ENCODE measurements at regions of chr17 and their contacts with region 1.

Region 1: DNA sequence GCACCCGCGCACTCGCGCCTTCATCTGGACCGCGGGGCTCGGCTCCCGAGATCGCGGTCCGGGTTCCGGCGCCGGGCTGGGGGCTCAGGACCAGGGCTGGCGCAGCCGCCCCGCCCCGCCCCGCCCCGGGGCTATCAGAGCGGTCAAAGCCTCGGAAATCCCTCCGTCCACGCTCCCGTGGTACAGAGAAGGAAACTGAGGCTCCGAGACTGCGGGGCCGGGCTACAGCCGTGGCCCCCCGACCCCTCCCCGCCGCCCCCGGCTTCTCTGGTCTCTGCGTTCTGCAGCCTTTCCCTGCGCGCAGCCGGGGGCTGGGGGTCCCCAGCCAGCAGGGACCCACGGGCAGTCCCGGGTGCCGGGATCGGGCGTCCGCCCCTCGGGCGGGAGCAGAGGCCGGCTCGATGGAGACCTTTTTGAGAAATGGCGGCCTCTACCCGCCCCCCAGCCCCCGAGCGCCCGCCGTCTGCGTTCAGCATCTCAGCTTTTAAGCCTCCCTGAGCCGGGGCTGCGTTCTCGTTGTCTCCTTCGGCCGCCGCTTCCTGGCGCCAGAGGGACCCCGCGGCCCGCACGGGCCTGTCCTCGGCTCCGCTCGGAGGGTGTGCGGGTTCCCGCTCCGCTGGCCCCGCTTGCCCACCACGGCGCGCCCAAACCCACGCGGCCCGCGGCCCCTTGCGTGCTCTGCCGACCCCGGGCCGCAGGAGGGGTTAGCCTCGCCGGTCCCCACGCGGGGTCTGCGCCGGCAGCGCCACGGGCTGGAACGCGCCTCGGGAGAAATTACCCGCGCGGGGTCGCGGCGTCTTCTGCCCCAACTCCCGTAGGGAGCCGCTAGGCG is 1.5 kb upstream of the NPTX1 start:
- DNase-seq: no peak
- H3K4me3 ChIP-seq: peak overlapping the region; percentile 12 to 28
- H3K27ac ChIP-seq: no peak overlapping the region
- H3K4me1 ChIP-seq: peaks cover 37% of the 10 kb centered on the region
- H3K27me3 ChIP-seq: peaks cover 42% of the 10 kb centered on the region
- CTCF ChIP-seq: peak in 2 of 4 experiments; percentile 38 to 47
- POLR2A ChIP-seq: no peak

Region 2: GRCh38 chr17:80195731-80196529 is 281.9 kb before region 1 on chr17:
- intact Hi-C with region 1: no loop called
- DNase-seq: no peak
- H3K4me3 ChIP-seq: no peak overlapping the region
- H3K27ac ChIP-seq: no peak overlapping the region
- H3K4me1 ChIP-seq: peaks cover 4% of the 10 kb centered on the region
- H3K27me3 ChIP-seq: no peaks in the 10 kb centered on the region
- CTCF ChIP-seq: peak; percentile 45 to 68 (median 52)
- POLR2A ChIP-seq: no peak

Region 3: DNA sequence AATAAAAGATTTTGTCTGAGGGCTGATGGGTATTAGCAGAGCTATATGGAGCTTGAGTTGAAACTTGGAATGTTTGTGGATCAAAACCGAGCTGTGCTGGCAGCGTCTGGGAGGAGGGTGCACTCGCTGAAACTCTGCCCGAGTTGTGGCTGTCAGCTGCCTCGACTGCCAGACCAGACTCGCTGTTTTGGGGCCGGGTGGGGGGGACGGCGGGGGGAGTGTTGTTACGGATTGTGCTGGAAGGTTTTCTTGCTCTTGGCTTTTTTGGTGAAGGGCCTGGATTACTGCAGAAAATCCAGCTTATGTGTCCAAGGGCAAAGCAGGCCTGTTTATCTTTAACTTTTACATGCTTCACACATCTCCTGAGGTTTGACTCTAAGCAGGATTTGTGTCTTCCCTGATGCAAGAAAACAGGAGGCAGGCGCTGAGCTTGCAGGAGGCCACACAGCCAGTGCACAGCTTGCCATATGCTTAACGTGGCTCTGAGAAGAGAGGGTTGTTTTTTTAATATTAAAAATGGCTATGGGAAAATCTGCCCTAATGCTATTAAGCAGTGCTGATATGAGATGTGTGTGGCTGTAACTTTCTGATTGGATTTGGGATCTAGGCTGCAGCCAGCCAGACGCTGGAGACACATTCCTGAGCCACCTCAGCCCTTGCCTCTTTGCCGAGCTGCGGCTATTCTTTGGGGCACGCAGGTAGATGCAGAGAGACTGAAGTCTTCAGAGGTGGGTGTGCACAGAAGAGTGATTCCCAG is 46.3 kb after region 1 on chr17:
- intact Hi-C with region 1: no loop called
- DNase-seq: no peak
- H3K4me3 ChIP-seq: no peak overlapping the region
- H3K27ac ChIP-seq: no peak overlapping the region
- H3K4me1 ChIP-seq: no peaks in the 10 kb centered on the region
- H3K27me3 ChIP-seq: no peaks in the 10 kb centered on the region
- CTCF ChIP-seq: no peak
- POLR2A ChIP-seq: no peak

Region 4: DNA sequence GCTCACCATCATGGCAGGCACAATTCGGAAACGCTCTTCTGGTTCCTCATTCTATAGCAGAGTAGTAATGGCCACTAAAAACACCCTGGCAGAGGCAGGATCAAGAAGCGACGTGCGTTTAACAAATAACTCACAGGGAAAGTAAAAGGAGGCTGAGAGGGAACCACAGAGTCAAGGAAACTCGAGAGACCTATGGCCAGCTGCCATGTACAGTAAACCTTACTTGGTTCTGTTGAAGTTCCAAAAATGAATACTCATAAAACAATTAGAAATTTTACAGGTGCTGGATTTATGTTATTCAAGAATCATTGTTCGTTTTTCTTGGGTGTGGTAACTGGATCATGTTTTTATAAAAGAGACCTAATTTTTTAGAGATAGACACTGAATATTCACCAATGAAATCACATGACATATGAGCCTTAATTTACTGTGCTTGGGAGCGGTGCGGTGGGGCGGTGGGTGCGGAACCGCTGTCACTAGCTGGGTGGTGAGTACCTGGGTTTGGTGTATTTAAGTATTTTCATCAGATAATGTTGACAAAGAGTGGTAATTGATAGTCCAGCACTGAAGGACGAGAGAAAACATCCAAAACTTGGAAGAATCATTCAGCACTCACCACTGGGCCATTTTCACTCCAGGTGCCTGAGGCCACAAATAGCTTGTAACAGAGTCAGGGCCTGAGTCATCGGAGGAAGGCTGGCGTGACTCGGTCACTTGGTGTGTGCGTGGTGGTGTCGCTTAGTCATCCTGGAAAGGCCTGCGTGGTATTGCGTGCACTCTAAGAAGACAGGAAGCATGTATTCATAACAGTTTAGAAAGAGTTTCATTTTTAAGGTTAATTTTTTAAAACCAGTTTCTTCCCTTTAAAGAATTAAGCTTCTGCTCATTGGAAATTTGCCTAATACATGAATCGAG is 378.3 kb after region 1 on chr17:
- intact Hi-C with region 1: loop called (anchors 10 kb)
- DNase-seq: no peak
- H3K4me3 ChIP-seq: no peak overlapping the region
- H3K27ac ChIP-seq: no peak overlapping the region
- H3K4me1 ChIP-seq: peaks cover 4% of the 10 kb centered on the region
- H3K27me3 ChIP-seq: no peaks in the 10 kb centered on the region
- CTCF ChIP-seq: no peak
- POLR2A ChIP-seq: no peak

Region 5: GRCh38 chr17:80970044-80970761 is 492.3 kb after region 1 on chr17:
- intact Hi-C with region 1: loop called (anchors 5 kb)
- DNase-seq: peak; percentile 32
- H3K4me3 ChIP-seq: no peak overlapping the region
- H3K27ac ChIP-seq: no peak overlapping the region
- H3K4me1 ChIP-seq: peaks cover 6% of the 10 kb centered on the region
- H3K27me3 ChIP-seq: peaks cover 10% of the 10 kb centered on the region
- CTCF ChIP-seq: peak; percentile 13 to 76 (median 66)
- POLR2A ChIP-seq: no peak